Naive thymus-derived CD4-positive, alpha-beta T cell (primary cell): ENCODE measurements at regions of chr19 and their contacts with region 1.

Region 1: DNA sequence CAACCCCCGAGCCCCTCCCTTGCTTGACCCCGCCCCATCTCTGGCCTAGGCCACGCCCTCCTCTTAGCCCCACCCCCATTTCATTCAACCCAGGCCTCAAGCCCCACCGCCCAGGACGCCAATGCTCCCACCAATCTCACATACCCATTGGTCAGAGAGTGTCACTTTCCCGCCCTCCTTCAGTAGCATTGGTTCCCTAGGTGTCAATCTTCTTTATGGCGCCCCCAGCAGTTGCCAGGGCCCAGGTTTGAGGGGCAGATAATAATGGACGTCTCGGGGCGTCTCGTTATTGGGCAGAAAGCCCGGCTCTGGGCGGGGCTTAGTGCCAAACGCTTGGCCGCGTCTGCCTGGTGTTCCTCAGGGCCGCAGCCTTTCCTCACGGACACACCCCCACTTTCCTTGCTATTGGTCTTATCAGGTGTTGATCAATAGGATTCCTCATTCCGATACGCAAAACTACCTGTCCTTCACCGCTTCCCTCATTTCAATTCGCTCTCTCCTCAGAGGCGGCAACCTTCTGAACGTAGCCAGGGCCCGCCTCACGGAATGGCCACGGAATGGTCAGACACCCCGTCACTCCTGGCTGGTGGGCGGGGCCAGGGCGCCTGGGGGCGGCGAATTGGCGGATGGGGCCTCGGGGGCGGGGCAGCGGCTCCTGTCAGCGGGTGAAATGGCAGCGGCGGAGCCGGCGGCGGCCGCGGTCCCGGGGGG is at the start of gene EVI5L:
- DNase-seq: peak; percentile 99 to 100 (median 99)
- ATAC-seq: peak; percentile 88
- H3K4me3 ChIP-seq: peak within 1 kb of the TSS; percentile 47
- H3K4me3 Mint-ChIP-seq: peak within 1 kb of the TSS; percentile 77 to 88 (median 84)
- H3K27ac ChIP-seq: peak within 1 kb of the TSS; percentile 50
- H3K27ac Mint-ChIP-seq: peak within 1 kb of the TSS; percentile 4 to 94 (median 84)
- H3K4me1 ChIP-seq: peaks cover 5 to 9% of the 10 kb centered on the region in 2 donors
- H3K4me1 Mint-ChIP-seq: peaks cover 5 to 25% (median 23%) of the 10 kb centered on the region in 7 donors
- H3K27me3 ChIP-seq: no peaks in the 10 kb centered on the region
- H3K27me3 Mint-ChIP-seq: peaks cover 0 to 11% (median 0%) of the 10 kb centered on the region in 5 donors
- total RNA-seq, gene EVI5L: 7.4 to 12.2 (median 11.4) TPM

Region 2: DNA sequence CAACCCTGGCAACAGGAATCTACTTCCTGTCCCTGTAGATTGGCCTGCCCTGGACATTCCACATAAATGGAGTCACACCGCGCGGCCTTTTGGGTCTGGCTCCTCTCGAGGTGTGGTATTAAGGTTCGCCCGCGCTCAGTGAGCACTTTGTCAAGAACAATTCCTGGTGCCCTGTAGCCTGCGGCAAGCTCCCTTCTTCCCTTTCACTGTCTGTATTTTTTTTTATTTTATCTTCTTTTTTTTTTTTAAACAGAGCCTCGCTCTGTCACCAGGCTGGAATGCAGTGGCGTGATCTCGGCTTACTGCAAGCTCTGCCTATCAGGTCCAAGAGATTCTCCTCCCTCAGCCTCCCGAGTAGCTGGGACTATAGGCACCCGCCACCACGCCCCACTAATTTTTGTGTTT is 369.2 kb before region 1 on chr19:
- CTCF ChIA-PET with region 1: no interaction called
- POLR2A ChIA-PET with region 1: no interaction called
- intact Hi-C with region 1: no loop called
- DNase-seq: no peak
- ATAC-seq: no peak
- H3K4me3 ChIP-seq: no peak overlapping the region
- H3K4me3 Mint-ChIP-seq: no peak overlapping the region
- H3K27ac ChIP-seq: no peak overlapping the region
- H3K27ac Mint-ChIP-seq: peak overlapping the region in 2 of 9 donors; percentile 52 to 53
- H3K4me1 ChIP-seq: no peaks in the 10 kb centered on the region
- H3K4me1 Mint-ChIP-seq: peaks cover 0 to 12% (median 4%) of the 10 kb centered on the region in 7 donors
- H3K27me3 ChIP-seq: no peaks in the 10 kb centered on the region
- H3K27me3 Mint-ChIP-seq: no peaks in the 10 kb centered on the region

Region 3: GRCh38 chr19:7629347-7630054 is 200.2 kb before region 1 on chr19 and contains the starts of genes PET100 and XAB2:
- CTCF ChIA-PET with region 1: no interaction called
- POLR2A ChIA-PET with region 1: no interaction called
- intact Hi-C with region 1: loop called in 1 of 2 experiments (anchors 1 kb)
- DNase-seq: peak; percentile 81 to 97 (median 95)
- ATAC-seq: peak; percentile 97
- H3K4me3 ChIP-seq: peak within 1 kb of the TSS; percentile 89
- H3K4me3 Mint-ChIP-seq: peak within 1 kb of the TSS; percentile 87 to 100 (median 98)
- H3K27ac ChIP-seq: peak within 1 kb of the TSS; percentile 92
- H3K27ac Mint-ChIP-seq: peak within 1 kb of the TSS; percentile 96 to 100 (median 99)
- H3K4me1 ChIP-seq: peaks cover 19 to 21% of the 10 kb centered on the region in 2 donors
- H3K4me1 Mint-ChIP-seq: peaks cover 25 to 57% (median 38%) of the 10 kb centered on the region in 7 donors
- H3K27me3 ChIP-seq: no peaks in the 10 kb centered on the region
- H3K27me3 Mint-ChIP-seq: no peaks in the 10 kb centered on the region
- total RNA-seq, gene PET100: 112 to 134 (median 117) TPM
- total RNA-seq, gene XAB2: 49.3 to 79.8 (median 76.4) TPM

Region 4: DNA sequence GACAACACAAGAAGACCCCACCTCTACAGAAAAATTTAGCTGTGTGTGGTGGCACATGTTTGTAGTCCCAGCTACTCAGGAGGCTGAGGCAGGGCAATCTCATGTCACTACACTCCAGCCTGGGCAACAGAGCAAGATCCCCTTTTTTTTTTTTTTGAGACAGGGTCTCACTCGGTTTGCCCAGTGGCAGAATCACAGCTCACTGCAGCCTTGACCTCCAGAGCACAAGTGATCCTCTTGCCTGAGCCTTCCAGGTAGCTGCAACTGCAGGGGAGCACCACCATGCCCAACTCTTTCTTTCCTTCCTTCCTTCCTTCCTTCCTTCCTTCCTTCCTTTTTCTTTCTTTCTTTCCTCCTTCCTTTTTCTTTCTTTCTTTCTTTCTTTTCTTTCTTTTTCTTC is 93.6 kb before region 1 on chr19:
- CTCF ChIA-PET with region 1: no interaction called
- POLR2A ChIA-PET with region 1: no interaction called
- intact Hi-C with region 1: no loop called
- DNase-seq: no peak
- ATAC-seq: no peak
- H3K4me3 ChIP-seq: no peak overlapping the region
- H3K4me3 Mint-ChIP-seq: no peak overlapping the region
- H3K27ac ChIP-seq: no peak overlapping the region
- H3K27ac Mint-ChIP-seq: no peak overlapping the region
- H3K4me1 ChIP-seq: no peaks in the 10 kb centered on the region
- H3K4me1 Mint-ChIP-seq: peaks cover 0 to 14% (median 5%) of the 10 kb centered on the region in 7 donors
- H3K27me3 ChIP-seq: no peaks in the 10 kb centered on the region
- H3K27me3 Mint-ChIP-seq: peaks cover 5 to 28% (median 6%) of the 10 kb centered on the region in 5 donors

Region 5: GRCh38 chr19:7861955-7862951 is 32.5 kb after region 1 on chr19:
- CTCF ChIA-PET with region 1: no interaction called
- POLR2A ChIA-PET with region 1: no interaction called
- intact Hi-C with region 1: loop called in 1 of 2 experiments (anchors 1 kb)
- DNase-seq: peak; percentile 49 to 78 (median 69)
- ATAC-seq: peak; percentile 84
- H3K4me3 ChIP-seq: peak overlapping the region; percentile 50
- H3K4me3 Mint-ChIP-seq: peak overlapping the region; percentile 23 to 83 (median 64)
- H3K27ac ChIP-seq: no peak overlapping the region
- H3K27ac Mint-ChIP-seq: no peak overlapping the region
- H3K4me1 ChIP-seq: peaks cover 0 to 16% of the 10 kb centered on the region in 2 donors
- H3K4me1 Mint-ChIP-seq: peaks cover 7 to 23% (median 10%) of the 10 kb centered on the region in 7 donors
- H3K27me3 ChIP-seq: no peaks in the 10 kb centered on the region
- H3K27me3 Mint-ChIP-seq: peaks cover 0 to 46% (median 0%) of the 10 kb centered on the region in 5 donors

Region 6: DNA sequence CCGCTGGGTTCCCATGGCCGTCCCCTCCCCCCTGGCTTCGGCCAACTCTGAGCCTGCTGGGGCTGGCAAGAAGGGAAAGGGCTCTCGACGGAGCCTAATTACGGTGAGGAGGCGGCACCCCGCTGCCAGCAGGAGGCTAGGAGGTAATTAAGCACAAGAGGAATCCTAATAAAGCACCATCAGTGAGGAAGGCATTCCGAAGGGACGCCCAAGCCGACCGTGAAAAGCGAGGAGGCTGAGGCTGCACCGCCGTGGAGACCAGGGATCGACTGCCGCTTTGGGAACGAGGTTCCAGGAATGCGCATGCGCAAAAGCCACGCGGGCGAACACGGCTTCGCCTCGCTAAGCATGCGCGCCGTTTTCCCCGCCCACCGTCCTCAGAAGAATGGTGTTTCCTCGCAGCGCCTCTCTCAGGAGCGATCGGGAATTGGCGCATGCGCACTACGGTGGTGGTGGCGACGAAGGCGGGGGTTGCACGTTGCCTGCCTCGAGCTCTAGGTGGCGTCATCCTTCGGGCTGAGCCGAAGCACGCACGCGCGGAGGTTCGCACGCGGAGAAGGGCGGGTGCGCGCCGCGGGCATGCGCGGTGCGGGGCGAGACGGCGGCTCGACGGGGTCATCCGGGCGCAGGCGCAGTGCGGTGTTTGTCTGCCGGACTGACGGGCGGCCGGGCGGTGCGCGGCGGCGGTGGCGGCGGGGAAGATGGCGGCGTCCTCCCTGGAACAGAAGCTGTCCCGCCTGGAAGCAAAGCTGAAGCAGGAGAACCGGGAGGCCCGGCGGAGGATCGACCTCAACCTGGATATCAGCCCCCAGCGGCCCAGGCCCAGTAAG is 73.7 kb after region 1 on chr19 and contains the start of gene MAP2K7:
- CTCF ChIA-PET with region 1: interaction called, 6 read pairs
- POLR2A ChIA-PET with region 1: interaction called, 3 read pairs
- intact Hi-C with region 1: loop called in 1 of 2 experiments (anchors 1 kb)
- DNase-seq: peak; percentile 99 to 100 (median 100)
- ATAC-seq: peak; percentile 91
- H3K4me3 ChIP-seq: peak within 1 kb of the TSS; percentile 91
- H3K4me3 Mint-ChIP-seq: peak within 1 kb of the TSS; percentile 87 to 95 (median 92)
- H3K27ac ChIP-seq: peak within 1 kb of the TSS; percentile 77
- H3K27ac Mint-ChIP-seq: peak within 1 kb of the TSS; percentile 91 to 98 (median 96)
- H3K4me1 ChIP-seq: peaks cover 20 to 24% of the 10 kb centered on the region in 2 donors
- H3K4me1 Mint-ChIP-seq: peaks cover 12 to 37% (median 30%) of the 10 kb centered on the region in 7 donors
- H3K27me3 ChIP-seq: no peaks in the 10 kb centered on the region
- H3K27me3 Mint-ChIP-seq: peaks cover 0 to 3% (median 0%) of the 10 kb centered on the region in 5 donors
- total RNA-seq, gene MAP2K7: 48.7 to 109 (median 66.5) TPM

Region 7: DNA sequence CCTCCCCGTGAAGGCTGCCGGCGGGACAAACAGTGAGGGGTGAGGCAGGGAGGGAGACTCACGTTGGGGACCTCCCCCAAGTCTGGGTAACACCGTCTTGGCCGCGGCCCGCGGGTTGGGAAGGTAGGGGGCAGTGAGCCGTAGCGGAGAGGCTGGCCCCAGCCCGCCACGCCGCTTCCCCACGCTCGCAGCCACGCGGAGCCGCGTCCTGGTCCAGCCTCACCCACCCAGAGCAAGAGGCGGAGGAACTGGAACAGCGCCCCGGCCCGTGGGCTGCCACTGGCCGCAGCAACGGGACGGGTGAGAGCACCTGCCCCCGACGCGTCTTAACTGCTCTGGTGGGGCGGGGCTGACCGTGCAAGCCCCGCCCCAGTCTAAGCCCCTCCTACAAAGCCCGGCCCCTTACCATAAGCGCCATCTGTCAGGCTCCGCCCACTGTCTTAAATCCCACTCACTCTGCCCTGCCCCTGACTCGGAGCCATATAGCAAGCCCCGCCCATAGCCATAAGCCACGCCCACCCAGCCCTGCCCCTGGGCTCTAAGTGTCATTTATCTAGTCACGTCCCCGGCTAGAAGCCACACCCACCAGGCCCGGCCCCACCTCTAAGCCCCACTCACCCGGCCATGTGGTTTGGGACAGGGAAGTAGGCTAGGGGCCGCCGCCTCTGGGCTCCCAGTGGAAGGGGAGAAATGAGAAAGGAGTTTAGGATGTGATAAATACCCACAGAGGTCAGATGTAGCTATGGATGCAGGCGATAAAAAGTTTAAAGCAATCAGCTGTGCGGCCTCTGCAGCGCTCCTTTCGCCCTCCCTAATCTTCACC is 220.8 kb after region 1 on chr19:
- CTCF ChIA-PET with region 1: no interaction called
- POLR2A ChIA-PET with region 1: no interaction called
- intact Hi-C with region 1: loop called in 1 of 2 experiments (anchors 1 kb)
- DNase-seq: peak; percentile 65 to 88 (median 79)
- ATAC-seq: peak; percentile 99
- H3K4me3 ChIP-seq: peak overlapping the region; percentile 54
- H3K4me3 Mint-ChIP-seq: peak overlapping the region; percentile 59 to 85 (median 80)
- H3K27ac ChIP-seq: peak overlapping the region; percentile 47
- H3K27ac Mint-ChIP-seq: peak overlapping the region in 6 of 9 donors; percentile 14 to 75 (median 68)
- H3K4me1 ChIP-seq: peaks cover 0 to 8% of the 10 kb centered on the region in 2 donors
- H3K4me1 Mint-ChIP-seq: peaks cover 7 to 24% (median 13%) of the 10 kb centered on the region in 7 donors
- H3K27me3 ChIP-seq: no peaks in the 10 kb centered on the region
- H3K27me3 Mint-ChIP-seq: peaks cover 0 to 17% (median 0%) of the 10 kb centered on the region in 5 donors